HEK293T (cell line): ENCODE measurements at regions of chr12 and their contacts with region 1.

Region 1: GRCh38 chr12:63843721-63844390 is 644 bp upstream of the SRGAP1 start:
- DNase-seq: peak; percentile 84

Region 2: GRCh38 chr12:63814146-63814772 is 29.6 kb before region 1 on chr12:
- CTCF ChIA-PET with region 1: no interaction called
- POLR2A ChIA-PET with region 1: no interaction called
- DNase-seq: no peak

Region 3: GRCh38 chr12:64181504-64182291 is 337.8 kb after region 1 on chr12:
- CTCF ChIA-PET with region 1: interaction called, 14 read pairs
- POLR2A ChIA-PET with region 1: interaction called, 3 read pairs
- DNase-seq: peak; percentile 57